ENCODE measurements at regions of chr19 and their contacts with region 1.

Region 1: GRCh38 chr19:49451430-49452181 is at the start of gene PIH1D1:
- DNase-seq: peak; percentile 100
- H3K4me3 ChIP-seq: peak within 1 kb of the TSS; percentile 98
- H3K27ac ChIP-seq: peak within 1 kb of the TSS; percentile 94
- H3K4me1 ChIP-seq: peaks cover 34% of the 10 kb centered on the region
- H3K27me3 ChIP-seq: no peaks in the 10 kb centered on the region
- CTCF ChIP-seq: no peak
- total RNA-seq, gene PIH1D1: 122 and 131 TPM in 2 replicates

Region 2: DNA sequence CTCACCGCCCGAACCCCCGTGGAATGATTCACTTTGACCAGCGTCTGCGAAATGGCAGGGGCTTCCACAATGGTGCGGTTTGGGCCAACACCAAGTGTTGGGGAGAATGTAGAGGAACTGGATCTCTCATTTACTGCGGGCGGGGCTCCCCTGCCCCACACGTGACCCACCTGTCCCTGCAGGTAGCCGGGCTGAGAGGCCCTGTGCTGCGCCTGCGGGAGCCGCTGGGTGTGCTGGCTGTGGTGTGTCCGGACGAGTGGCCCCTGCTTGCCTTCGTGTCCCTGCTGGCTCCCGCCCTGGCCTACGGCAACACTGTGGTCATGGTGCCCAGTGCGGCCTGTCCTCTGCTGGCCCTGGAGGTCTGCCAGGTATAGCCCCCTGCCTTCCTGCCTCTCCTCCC is 16.6 kb after region 1 on chr19:
- CTCF ChIA-PET with region 1: no interaction called
- POLR2A ChIA-PET with region 1: no interaction called
- intact Hi-C with region 1: no loop called
- DNase-seq: no peak
- H3K4me3 ChIP-seq: no peak overlapping the region
- H3K27ac ChIP-seq: no peak overlapping the region
- H3K4me1 ChIP-seq: peaks cover 8% of the 10 kb centered on the region
- H3K27me3 ChIP-seq: no peaks in the 10 kb centered on the region
- CTCF ChIP-seq: no peak

Region 3: DNA sequence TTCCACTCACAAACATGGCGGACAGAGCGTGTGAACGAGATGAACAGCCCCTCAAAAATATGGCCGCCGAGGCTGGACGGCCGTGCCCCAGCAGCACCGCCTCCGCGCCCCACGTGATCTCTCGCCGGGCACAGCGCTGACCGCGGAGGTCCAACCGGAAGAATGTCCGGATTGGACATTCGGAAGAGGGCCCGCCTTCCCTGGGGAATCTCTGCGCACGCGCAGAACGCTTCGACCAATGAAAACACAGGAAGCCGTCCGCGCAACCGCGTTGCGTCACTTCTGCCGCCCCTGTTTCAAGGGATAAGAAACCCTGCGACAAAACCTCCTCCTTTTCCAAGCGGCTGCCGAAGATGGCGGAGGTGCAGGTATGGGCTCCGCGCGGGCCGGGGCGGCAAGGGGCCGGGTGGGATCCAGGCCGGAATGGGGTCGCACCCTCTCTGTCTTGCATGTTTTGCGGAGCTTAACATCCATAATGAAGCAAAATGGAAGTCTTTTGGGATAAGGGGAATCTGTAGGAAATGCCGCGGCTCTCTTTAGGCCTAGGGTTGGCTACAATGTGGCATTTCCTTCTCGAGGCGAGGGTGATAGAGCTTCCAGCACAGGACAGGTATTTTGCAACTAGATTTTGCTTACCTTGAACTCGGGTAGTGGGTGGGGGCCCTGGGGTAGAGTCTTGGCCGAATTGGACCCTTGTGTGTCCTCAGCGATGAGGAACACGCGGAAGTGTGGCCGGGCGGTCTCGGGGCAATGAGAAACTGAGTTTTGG is 35.9 kb after region 1 on chr19 and contains the start of gene RPL13A:
- CTCF ChIA-PET with region 1: no interaction called
- POLR2A ChIA-PET with region 1: no interaction called
- intact Hi-C with region 1: loop called (anchors 1 kb)
- DNase-seq: peak; percentile 99
- H3K4me3 ChIP-seq: peak within 1 kb of the TSS; percentile 83
- H3K27ac ChIP-seq: peak within 1 kb of the TSS; percentile 97
- H3K4me1 ChIP-seq: peaks cover 16% of the 10 kb centered on the region
- H3K27me3 ChIP-seq: no peaks in the 10 kb centered on the region
- CTCF ChIP-seq: no peak
- total RNA-seq, gene RPL13A: 2,390 and 2,393 TPM in 2 replicates

Region 4: GRCh38 chr19:49497047-49497788 is 45.6 kb after region 1 on chr19:
- CTCF ChIA-PET with region 1: no interaction called
- POLR2A ChIA-PET with region 1: no interaction called
- intact Hi-C with region 1: loop called (anchors 2 kb)
- DNase-seq: peak; percentile 87
- H3K4me3 ChIP-seq: peak overlapping the region; percentile 82
- H3K27ac ChIP-seq: peak overlapping the region; percentile 99
- H3K4me1 ChIP-seq: peaks cover 33% of the 10 kb centered on the region
- H3K27me3 ChIP-seq: no peaks in the 10 kb centered on the region
- CTCF ChIP-seq: no peak

Region 5: DNA sequence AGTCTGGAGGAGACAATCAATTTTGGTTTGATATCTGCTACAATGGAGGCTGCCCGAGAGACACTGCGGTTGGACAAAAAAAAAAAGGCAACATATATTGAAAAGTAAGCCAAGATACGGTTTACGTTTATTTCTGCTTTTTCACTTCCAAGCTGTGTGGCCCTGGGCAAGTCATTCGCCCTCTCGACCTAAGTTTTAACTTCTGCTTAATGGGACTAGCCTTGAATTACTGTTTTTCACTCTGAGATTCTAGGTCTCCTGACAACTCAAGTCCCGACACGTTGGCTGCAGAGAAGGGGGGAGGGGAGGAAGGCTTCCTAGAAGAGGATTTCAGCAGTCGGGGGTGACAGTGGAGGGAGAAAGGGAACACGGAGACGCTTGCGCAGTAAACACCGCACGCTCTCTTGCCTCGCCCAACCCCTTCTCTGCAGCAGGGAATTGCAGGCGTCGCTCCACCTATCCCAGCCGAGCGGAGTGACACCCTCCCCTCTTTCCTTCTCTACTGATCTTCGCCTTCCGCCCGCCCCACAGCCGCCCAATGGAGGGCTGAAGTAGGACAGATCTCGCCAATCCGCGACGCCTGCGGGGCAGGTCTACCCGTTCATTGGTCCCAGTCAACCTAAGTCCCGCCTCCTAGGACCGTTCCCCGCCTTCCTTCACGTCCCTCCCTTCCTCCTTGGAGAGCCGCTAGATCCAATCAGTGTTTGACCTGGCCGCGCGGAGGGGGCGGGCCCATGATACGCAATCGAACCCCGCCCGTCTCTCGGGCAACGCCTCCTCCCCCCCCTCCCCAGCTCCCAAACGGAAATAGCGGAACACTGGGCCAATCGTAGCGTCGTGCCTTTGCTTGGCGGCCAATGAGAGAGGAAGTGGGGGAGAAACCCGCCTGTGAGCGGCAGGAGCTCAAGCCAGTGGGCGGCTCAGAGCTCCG is 314.7 kb after region 1 on chr19:
- CTCF ChIA-PET with region 1: no interaction called
- POLR2A ChIA-PET with region 1: interaction called, 24 read pairs
- intact Hi-C with region 1: no loop called
- DNase-seq: peak; percentile 100
- H3K4me3 ChIP-seq: peak overlapping the region; percentile 99
- H3K27ac ChIP-seq: peak overlapping the region; percentile 95
- H3K4me1 ChIP-seq: peaks cover 15% of the 10 kb centered on the region
- H3K27me3 ChIP-seq: no peaks in the 10 kb centered on the region
- CTCF ChIP-seq: no peak

Region 6: GRCh38 chr19:49817964-49818648 is 366.5 kb after region 1 on chr19 and contains the start of gene MED25:
- CTCF ChIA-PET with region 1: no interaction called
- POLR2A ChIA-PET with region 1: no interaction called
- intact Hi-C with region 1: no loop called
- DNase-seq: peak; percentile 91
- H3K4me3 ChIP-seq: peak within 1 kb of the TSS; percentile 88
- H3K27ac ChIP-seq: peak within 1 kb of the TSS; percentile 93
- H3K4me1 ChIP-seq: peaks cover 12% of the 10 kb centered on the region
- H3K27me3 ChIP-seq: no peaks in the 10 kb centered on the region
- CTCF ChIP-seq: 0 out of 2 replicates have a peak, but pooled peaks have one; percentile 10
- total RNA-seq, gene MED25: 93.0 and 111 TPM in 2 replicates